Right ventricle myocardium inferior (tissue), 1 donor: ENCODE measurements at regions of chr14 and their contacts with region 1.

Region 1: DNA sequence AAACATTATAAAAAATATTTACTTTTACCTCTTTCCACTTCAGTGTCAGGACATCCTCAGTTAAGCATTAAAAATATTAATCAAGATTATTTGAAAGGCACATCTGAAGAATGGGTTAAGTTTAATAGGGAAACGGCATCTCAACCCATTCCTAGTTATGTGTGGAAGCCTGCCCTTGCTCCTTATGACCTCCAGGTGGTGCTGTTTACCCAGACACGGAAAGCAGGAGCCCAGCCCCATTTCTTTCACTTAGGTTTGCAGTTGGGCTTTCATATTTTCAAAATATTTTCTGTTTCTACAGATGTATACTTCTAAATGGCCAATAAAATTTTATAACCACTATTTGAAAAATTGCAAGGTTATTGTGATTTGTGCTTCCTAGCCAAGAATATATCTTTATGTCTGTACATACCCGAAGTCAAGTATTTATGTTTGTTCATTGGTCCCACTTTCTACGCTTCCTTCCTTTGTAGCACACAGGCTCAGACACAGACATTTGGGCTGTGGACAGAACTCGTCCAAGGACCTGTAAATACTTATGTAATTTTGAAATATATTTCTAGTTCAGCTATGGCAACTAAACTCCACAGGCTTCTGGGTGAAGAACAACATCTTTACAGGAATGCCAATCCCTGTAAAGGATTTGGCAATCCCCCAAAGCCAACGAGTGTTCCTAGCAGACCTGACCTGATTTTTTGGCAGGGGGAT is 247.1 kb downstream of the AKAP6 start:
- DNase-seq: no peak
- ATAC-seq: peak; percentile 84

Region 2: GRCh38 chr14:31977001-31977556 is 599.2 kb before region 1 on chr14:
- intact Hi-C with region 1: no loop called
- DNase-seq: no peak
- ATAC-seq: no peak

Region 3: GRCh38 chr14:32709027-32709426 is 132.8 kb after region 1 on chr14:
- intact Hi-C with region 1: loop called (anchors 5 kb)
- DNase-seq: no peak
- ATAC-seq: peak; percentile 77

Region 4: GRCh38 chr14:32820181-32820580 is 243.9 kb after region 1 on chr14:
- intact Hi-C with region 1: loop called (anchors 5 kb)
- DNase-seq: no peak
- ATAC-seq: peak; percentile 74

Region 5: GRCh38 chr14:33432407-33433023 is 856.3 kb after region 1 on chr14:
- intact Hi-C with region 1: loop called (anchors 10 kb)
- DNase-seq: no peak
- ATAC-seq: no peak

Region 6: GRCh38 chr14:33792720-33793368 is 1216.6 kb after region 1 on chr14:
- intact Hi-C with region 1: loop called (anchors 5 kb)
- DNase-seq: peak; percentile 84
- ATAC-seq: peak; percentile 85

Region 7: DNA sequence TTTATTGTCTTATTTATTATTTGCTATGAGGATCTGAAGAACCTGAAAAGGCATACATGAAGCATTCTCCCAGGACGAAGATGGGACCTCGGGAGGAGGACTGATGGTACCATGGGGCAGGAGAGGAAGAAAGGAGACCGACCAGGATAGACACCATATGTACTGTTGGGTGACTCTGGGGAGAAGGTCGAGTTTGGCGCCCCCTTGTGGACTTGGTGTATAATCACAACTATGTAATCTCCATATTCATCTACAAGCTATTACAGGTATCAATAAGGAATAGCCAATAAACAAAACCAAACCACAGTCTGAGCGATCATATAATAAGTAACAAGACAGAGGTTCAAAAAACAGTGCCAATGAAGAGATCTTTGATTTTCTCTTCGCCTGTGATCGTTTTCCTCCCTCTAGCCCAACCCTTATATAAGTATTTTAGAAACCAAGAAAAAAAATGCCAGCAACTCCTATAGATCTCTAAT is 1746.7 kb after region 1 on chr14:
- intact Hi-C with region 1: loop called (anchors 10 kb)
- DNase-seq: peak; percentile 80
- ATAC-seq: peak; percentile 54